CD4-positive, alpha-beta memory T cell (primary cell): ENCODE measurements at regions of chr20 and their contacts with region 1.

Region 1: DNA sequence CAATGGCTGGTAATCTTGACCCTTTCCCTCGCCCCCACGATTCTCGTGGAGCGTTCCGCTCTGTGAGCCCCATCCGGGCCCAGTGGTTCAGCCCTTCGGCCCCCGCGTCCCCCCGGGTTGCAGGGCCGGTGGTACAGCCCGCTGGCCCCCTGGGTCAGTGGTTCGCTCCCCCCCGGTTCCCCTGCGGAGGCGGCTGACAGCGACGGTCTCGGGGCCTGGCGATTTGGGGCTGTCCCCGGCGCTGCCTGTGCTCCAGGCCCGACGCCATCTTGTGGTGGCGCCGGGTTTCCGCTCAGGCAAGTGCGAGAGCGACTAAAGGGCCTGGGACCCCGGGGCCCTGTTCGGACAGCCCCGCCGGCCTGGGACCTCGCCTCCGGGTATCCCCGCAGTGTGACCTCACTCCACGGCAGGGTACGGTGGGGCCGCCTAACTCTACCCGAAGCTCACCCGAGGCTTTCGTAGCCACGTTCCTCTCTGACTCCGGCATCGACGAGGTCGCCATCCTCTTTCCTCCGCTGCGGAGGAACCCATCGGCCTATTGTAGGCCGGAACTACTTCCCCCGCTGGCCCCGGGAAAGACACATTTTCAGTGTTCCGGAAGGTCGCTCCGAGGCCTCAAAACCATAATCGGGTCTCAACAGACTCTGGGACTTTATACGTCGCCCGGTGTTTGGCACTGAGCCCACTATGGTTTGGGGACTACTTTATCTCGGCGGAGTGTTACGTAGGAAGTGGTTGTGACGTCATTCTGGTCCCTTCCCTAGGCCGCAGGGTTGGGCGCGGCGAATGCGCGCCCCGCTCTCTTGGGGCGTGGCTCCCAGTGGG is at the start of gene ZNF335:
- DNase-seq: peak; percentile 92 to 98 (median 96)
- H3K4me3 ChIP-seq: peak within 1 kb of the TSS; percentile 79 to 97
- H3K4me3 Mint-ChIP-seq: peak within 1 kb of the TSS; percentile 91 to 99 (median 95)
- H3K27ac ChIP-seq: peak within 1 kb of the TSS; percentile 100
- H3K27ac Mint-ChIP-seq: peak within 1 kb of the TSS; percentile 99 to 100 (median 100)
- H3K4me1 ChIP-seq: peaks cover 30% of the 10 kb centered on the region
- H3K4me1 Mint-ChIP-seq: peaks cover 14 to 33% (median 22%) of the 10 kb centered on the region in 4 donors
- H3K27me3 ChIP-seq: no peaks in the 10 kb centered on the region
- H3K27me3 Mint-ChIP-seq: peaks cover 2 to 8% of the 10 kb centered on the region in 2 donors
- total RNA-seq, gene ZNF335: 62.5 to 63.2 TPM

Region 2: DNA sequence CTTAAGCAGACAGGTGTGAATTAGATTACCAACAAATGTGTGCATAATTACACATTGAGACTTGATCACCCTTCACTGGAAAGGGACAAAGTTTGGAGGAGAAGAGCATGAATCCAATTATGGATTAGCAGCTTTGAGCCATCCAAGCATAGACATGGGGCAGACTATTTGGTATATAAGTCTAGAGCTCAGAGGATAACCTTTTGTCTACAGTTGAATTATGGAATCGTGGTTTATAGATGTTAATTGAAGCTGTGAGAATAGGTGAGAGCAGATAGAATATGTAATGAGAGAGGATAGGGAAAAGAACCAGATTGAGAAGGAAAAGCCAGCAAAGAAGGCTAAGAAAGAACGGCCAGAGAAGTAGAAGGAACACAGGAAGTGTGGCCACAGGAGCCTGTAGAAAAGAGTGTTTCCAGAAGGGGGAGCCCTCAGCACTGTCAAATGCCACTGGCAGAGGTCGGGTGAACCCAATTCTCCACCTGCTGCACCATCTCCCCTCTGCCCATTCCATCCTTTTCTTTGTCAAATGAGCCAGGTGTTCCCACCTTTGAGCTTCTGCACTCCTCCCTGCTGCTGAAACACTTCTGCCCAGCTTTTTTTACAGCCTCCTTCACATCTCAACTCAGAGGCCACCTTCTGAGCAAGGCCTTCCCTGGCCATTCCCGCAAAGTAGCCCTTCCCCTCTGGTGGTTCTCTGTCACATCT is 172.8 kb before region 1 on chr20:
- CTCF ChIA-PET with region 1: interaction called, 38 read pairs
- POLR2A ChIA-PET with region 1: interaction called, 24 read pairs
- intact Hi-C with region 1: loop called (anchors 5 kb)
- DNase-seq: peak; percentile 56 to 62 (median 60)
- H3K4me3 ChIP-seq: no peak overlapping the region
- H3K4me3 Mint-ChIP-seq: no peak overlapping the region
- H3K27ac ChIP-seq: no peak overlapping the region
- H3K27ac Mint-ChIP-seq: peak overlapping the region in 6 of 7 donors; percentile 3 to 89 (median 46)
- H3K4me1 ChIP-seq: peaks cover 7% of the 10 kb centered on the region
- H3K4me1 Mint-ChIP-seq: peaks cover 4 to 11% (median 8%) of the 10 kb centered on the region in 4 donors
- H3K27me3 ChIP-seq: no peaks in the 10 kb centered on the region
- H3K27me3 Mint-ChIP-seq: no peaks in the 10 kb centered on the region

Region 3: GRCh38 chr20:45880988-45881788 is 90.7 kb before region 1 on chr20 and contains the start of gene ZSWIM1:
- CTCF ChIA-PET with region 1: interaction called, 6 read pairs
- POLR2A ChIA-PET with region 1: interaction called, 25 read pairs
- intact Hi-C with region 1: no loop called
- DNase-seq: peak; percentile 97 to 99 (median 97)
- H3K4me3 ChIP-seq: peak within 1 kb of the TSS; percentile 68 to 99
- H3K4me3 Mint-ChIP-seq: peak within 1 kb of the TSS; percentile 82 to 94 (median 90)
- H3K27ac ChIP-seq: peak within 1 kb of the TSS; percentile 65
- H3K27ac Mint-ChIP-seq: peak within 1 kb of the TSS; percentile 83 to 97 (median 95)
- H3K4me1 ChIP-seq: peaks cover 44% of the 10 kb centered on the region
- H3K4me1 Mint-ChIP-seq: peaks cover 30 to 47% (median 37%) of the 10 kb centered on the region in 4 donors
- H3K27me3 ChIP-seq: no peaks in the 10 kb centered on the region
- H3K27me3 Mint-ChIP-seq: no peaks in the 10 kb centered on the region
- total RNA-seq, gene ZSWIM1: 18.2 to 18.5 TPM

Region 4: GRCh38 chr20:45957081-45957941 is 14.6 kb before region 1 on chr20:
- CTCF ChIA-PET with region 1: interaction called, 56 read pairs
- POLR2A ChIA-PET with region 1: interaction called, 141 read pairs
- intact Hi-C with region 1: no loop called
- DNase-seq: no peak
- H3K4me3 ChIP-seq: no peak overlapping the region
- H3K4me3 Mint-ChIP-seq: no peak overlapping the region
- H3K27ac ChIP-seq: no peak overlapping the region
- H3K27ac Mint-ChIP-seq: peak overlapping the region in 1 of 7 donors; percentile 48
- H3K4me1 ChIP-seq: no peaks in the 10 kb centered on the region
- H3K4me1 Mint-ChIP-seq: peaks cover 0 to 2% (median 0%) of the 10 kb centered on the region in 4 donors
- H3K27me3 ChIP-seq: no peaks in the 10 kb centered on the region
- H3K27me3 Mint-ChIP-seq: no peaks in the 10 kb centered on the region

Region 5: DNA sequence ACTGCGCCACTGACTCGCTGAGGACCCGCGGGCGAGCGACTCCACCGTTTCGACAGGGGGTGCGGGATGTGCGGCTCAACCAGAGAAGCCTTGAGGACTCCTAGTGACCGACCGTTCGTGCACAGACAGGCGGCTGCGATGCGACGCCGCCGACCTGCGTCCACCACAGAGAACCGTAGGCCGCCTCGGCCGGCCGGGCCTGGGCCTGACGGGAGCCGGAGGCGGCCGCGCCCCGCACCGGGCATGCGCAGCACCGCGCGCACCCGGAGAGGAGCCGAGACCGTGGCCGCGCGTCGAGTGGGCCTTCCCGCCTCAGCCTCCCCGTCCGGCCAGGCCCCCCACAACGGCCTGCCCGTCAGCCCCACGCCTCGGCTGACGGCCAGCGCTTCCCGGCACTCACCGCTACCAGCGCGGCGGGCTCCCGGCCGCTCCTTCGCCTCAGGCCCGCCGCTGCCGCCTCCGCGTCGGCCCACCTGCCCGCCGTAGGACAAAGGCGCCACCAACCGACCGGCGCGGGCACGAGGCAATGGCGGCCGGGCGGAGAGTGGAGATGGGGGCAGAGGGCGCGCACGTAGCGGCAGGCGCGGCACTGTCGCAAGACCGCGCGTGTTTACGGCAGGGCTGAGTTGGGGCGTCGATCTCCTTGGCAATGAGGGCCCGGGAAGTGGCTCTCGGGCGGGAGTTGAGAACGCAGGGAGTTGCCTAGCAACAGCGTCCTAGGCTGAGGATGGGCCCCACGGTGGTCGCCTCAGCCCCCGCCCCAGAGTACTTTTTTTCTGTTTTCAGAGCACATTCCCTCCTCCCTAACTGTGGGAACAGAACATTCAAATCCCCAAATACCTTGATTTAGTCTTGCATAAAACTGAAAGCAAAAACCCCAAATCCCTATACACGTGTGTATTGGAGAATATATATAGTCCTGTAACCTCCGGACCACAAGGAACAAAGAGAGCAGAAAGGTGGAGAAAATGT is 117.8 kb after region 1 on chr20 and contains the start of gene NCOA5:
- CTCF ChIA-PET with region 1: interaction called, 4 read pairs
- POLR2A ChIA-PET with region 1: interaction called, 16 read pairs
- intact Hi-C with region 1: loop called (anchors 1 kb)
- DNase-seq: peak; percentile 93 to 96 (median 95)
- H3K4me3 ChIP-seq: peak within 1 kb of the TSS; percentile 58 to 86
- H3K4me3 Mint-ChIP-seq: peak within 1 kb of the TSS; percentile 88 to 93 (median 89)
- H3K27ac ChIP-seq: peak within 1 kb of the TSS; percentile 93
- H3K27ac Mint-ChIP-seq: peak within 1 kb of the TSS; percentile 86 to 95 (median 93)
- H3K4me1 ChIP-seq: peaks cover 50% of the 10 kb centered on the region
- H3K4me1 Mint-ChIP-seq: peaks cover 31 to 55% (median 47%) of the 10 kb centered on the region in 4 donors
- H3K27me3 ChIP-seq: no peaks in the 10 kb centered on the region
- H3K27me3 Mint-ChIP-seq: no peaks in the 10 kb centered on the region
- total RNA-seq, gene NCOA5: 37.8 to 47.2 TPM

Region 6: DNA sequence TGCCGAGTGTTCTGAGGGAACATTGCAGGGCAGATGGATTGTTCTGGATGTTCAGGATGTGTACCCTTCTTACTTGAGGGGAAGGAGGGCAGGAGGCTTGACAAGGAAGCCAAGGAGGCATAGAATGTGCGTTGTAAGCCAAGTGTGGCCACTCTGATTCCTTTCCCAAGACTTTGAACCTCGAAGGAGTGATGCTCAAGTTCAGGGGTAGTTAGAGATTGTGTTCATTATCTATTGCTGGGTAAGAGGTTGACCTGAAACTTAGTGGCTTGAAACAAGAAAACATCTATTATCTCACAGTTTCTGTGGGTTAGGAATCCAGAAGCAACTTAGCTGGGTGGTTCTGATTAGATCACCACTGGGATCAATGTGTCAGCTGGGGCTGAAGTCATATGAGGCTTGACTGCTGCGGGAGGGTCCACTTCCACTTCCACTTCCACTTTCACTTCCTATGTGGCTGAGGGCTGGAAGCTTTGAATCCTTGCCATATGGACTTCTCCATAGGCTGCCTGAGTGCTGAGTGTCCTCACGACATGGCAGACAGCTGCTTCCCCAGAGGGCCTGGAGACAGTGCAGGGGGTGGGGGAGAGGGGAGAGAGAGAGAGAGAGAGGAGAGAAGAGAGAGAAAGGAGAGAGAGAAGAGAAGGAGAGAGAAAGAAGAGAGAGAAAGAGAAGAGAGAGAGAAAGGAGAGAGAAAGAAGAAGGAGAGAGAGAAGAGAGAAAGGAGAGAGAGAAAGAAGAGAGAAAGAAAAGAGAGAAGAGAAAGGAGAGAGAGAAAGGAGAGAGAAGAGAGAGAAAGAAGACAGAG is 139.3 kb after region 1 on chr20:
- CTCF ChIA-PET with region 1: no interaction called
- POLR2A ChIA-PET with region 1: no interaction called
- intact Hi-C with region 1: no loop called
- DNase-seq: no peak
- H3K4me3 ChIP-seq: no peak overlapping the region
- H3K4me3 Mint-ChIP-seq: no peak overlapping the region
- H3K27ac ChIP-seq: no peak overlapping the region
- H3K27ac Mint-ChIP-seq: no peak overlapping the region
- H3K4me1 ChIP-seq: no peaks in the 10 kb centered on the region
- H3K4me1 Mint-ChIP-seq: peaks cover 0 to 3% (median 0%) of the 10 kb centered on the region in 4 donors
- H3K27me3 ChIP-seq: peaks cover 6% of the 10 kb centered on the region
- H3K27me3 Mint-ChIP-seq: peaks cover 32 to 51% of the 10 kb centered on the region in 2 donors

Region 7: GRCh38 chr20:46757754-46758678 is 786.1 kb after region 1 on chr20:
- CTCF ChIA-PET with region 1: no interaction called
- POLR2A ChIA-PET with region 1: no interaction called
- intact Hi-C with region 1: no loop called
- DNase-seq: peak in 4 of 5 donors; percentile 25 to 48 (median 44)
- H3K4me3 ChIP-seq: no peak overlapping the region
- H3K4me3 Mint-ChIP-seq: peak overlapping the region in 1 of 8 donors; percentile 14
- H3K27ac ChIP-seq: no peak overlapping the region
- H3K27ac Mint-ChIP-seq: peak overlapping the region in 3 of 7 donors; percentile 7 to 55 (median 42)
- H3K4me1 ChIP-seq: no peaks in the 10 kb centered on the region
- H3K4me1 Mint-ChIP-seq: peaks cover 0 to 7% (median 5%) of the 10 kb centered on the region in 4 donors
- H3K27me3 ChIP-seq: no peaks in the 10 kb centered on the region
- H3K27me3 Mint-ChIP-seq: peaks cover 5 to 6% of the 10 kb centered on the region in 2 donors